ENCODE measurements at regions of chr10 and their contacts with region 1.

Region 1: GRCh38 chr10:26890956-26891355 is 30.2 kb upstream of the ABI1 start:
- DNase-seq: peak; percentile 32 to 72 (median 60)
- H3K4me3 ChIP-seq: no peak overlapping the region
- H3K27ac ChIP-seq: no peak overlapping the region
- H3K4me1 ChIP-seq: no peaks in the 10 kb centered on the region
- H3K27me3 ChIP-seq: no peaks in the 10 kb centered on the region
- CTCF ChIP-seq: peak; percentile 32 to 58 (median 46)
- POLR2A ChIP-seq: no peak

Region 2: DNA sequence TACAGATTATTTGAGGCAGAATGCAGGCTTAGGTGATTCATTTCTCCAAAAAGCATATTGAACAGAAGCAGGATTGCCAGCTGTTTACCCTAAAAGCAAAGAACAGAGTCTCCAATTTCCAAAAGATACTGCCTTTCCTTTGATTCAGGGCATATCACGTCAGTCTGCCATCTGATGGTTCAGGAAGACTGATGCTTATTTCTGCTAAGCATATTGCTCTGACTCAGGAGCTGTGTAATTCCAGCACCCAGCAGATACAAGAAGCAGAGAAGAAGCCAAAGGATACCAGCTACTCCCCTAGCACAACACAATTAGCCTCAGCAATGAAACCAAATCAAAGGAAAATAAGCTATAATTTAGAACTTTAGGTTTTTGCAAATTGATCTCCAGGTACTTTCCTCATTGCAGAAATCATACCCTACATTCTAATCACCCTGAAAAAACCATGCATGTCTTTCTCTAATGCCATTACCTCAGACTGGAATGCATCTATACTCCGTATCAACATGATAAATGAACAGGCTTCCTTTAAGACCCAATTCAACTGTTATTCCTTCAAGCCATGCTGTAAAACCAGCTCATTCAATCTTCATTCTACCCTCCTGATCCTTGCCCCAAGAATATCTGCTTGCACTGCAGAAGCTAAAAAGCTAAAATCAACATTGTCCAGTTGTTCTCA is 85.2 kb before region 1 on chr10:
- intact Hi-C with region 1: no loop called
- DNase-seq: no peak
- H3K4me3 ChIP-seq: no peak overlapping the region
- H3K27ac ChIP-seq: no peak overlapping the region
- H3K4me1 ChIP-seq: peaks cover 12 to 24% of the 10 kb centered on the region in 2 donors
- H3K27me3 ChIP-seq: no peaks in the 10 kb centered on the region
- CTCF ChIP-seq: no peak
- POLR2A ChIP-seq: no peak

Region 3: DNA sequence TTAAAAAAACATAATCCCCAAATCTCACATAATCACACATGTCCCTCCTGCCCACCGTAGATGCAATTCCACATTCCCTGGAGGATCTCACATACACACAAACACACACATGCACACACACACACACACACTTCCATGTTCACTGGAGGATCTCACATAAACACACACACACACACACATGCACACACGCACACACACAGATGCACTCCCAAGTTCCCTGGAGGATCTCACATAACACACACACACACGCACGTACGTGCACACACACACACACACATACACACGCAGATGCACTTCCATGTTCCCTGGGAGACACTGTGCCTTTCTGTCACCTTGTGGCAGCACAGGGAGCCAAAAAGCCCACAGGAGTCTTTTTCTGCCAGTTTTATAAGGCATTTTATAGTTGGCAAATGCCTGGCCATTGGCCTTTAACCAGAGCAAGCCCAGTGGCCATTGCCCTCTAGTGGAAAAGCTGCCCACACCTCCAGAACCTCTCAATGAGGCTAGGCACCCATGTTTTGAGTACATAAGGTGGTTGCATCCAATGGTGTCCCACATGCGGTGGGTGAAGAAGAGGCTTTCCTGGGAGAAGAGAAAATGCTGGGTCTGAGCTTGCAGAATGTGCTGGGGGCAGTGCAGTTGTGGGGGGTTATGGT is 465.1 kb after region 1 on chr10:
- intact Hi-C with region 1: loop called in 1 of 2 experiments (anchors 5 kb)
- DNase-seq: no peak
- H3K4me3 ChIP-seq: no peak overlapping the region
- H3K27ac ChIP-seq: no peak overlapping the region
- H3K4me1 ChIP-seq: no peaks in the 10 kb centered on the region
- H3K27me3 ChIP-seq: no peaks in the 10 kb centered on the region
- CTCF ChIP-seq: no peak
- POLR2A ChIP-seq: no peak